ENCODE measurements at regions of chr14 and their contacts with region 1.

Region 1: GRCh38 chr14:23112359-23113178 is 6.5 kb downstream of the CEBPE start:
- DNase-seq: no peak
- ATAC-seq: no peak
- H3K4me3 ChIP-seq: no peak overlapping the region
- H3K27ac ChIP-seq: no peak overlapping the region
- H3K4me1 ChIP-seq: no peaks in the 10 kb centered on the region
- H3K27me3 ChIP-seq: no peaks in the 10 kb centered on the region; the same call in 1 of the 2 replicates
- CTCF ChIP-seq: no peak

Region 2: GRCh38 chr14:23068476-23069412 is 43.8 kb before region 1 on chr14:
- CTCF ChIA-PET with region 1: interaction called, 10 read pairs
- POLR2A ChIA-PET with region 1: interaction called, 6 read pairs
- in situ Hi-C with region 1: no loop called
- intact Hi-C with region 1: no loop called
- DNase-seq: peak; percentile 86
- ATAC-seq: peak; percentile 88
- H3K4me3 ChIP-seq: no peak overlapping the region
- H3K27ac ChIP-seq: peak overlapping the region; percentile 7; the same call in 1 of the 2 replicates
- H3K4me1 ChIP-seq: peaks cover 16% of the 10 kb centered on the region
- H3K27me3 ChIP-seq: no peaks in the 10 kb centered on the region
- CTCF ChIP-seq: peak; percentile 95

Region 3: GRCh38 chr14:23195550-23196101 is 83.1 kb after region 1 on chr14:
- CTCF ChIA-PET with region 1: no interaction called
- POLR2A ChIA-PET with region 1: interaction called, 14 read pairs
- in situ Hi-C with region 1: no loop called
- intact Hi-C with region 1: no loop called
- DNase-seq: no peak
- ATAC-seq: no peak
- H3K4me3 ChIP-seq: no peak overlapping the region
- H3K27ac ChIP-seq: no peak overlapping the region
- H3K4me1 ChIP-seq: no peaks in the 10 kb centered on the region
- H3K27me3 ChIP-seq: no peaks in the 10 kb centered on the region
- CTCF ChIP-seq: no peak